Activated naive CD4-positive, alpha-beta T cell treated with anti-CD3 and anti-CD28 coated beads for 36 hours (primary cell): ENCODE measurements at regions of chr6 and their contacts with region 1.

Region 1: DNA sequence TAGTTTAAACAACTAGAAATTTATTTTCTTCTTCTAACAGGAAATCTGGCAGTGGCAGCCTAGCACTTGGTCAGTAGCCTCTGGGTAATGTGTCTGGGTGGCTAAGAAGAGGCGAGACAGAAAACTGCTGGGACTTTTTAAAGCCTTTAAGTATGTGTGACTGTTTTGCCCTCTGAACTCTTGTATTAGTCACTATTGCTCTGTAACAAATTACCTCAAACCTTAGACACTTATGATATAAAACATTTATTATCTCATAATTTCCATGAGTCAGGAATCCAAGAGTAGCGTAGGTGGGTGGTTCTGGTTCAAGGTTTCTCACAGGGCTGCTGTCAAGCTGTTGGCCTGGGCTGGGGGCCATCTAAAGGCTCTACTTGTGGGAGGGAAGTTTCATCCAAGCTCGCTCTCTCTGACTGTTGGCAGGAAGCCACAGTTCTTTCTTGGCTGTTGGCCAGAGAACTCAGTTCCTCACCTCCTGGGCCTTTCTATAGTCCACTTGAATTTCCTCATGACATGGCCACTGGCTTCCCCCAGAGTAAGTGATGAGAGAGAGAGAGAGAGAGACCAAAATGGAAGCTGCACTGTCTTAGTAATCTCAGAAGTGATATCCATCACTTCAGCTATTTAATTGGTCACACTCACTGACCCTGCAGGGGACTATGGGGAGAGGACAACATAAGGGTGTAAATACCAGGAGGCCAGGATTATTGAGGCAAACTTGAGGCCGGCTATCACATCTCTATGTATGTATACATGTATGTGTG is 17.4 kb upstream of the TBC1D22B start:
- DNase-seq: peak; percentile 93
- H3K4me3 Mint-ChIP-seq: no peak overlapping the region
- H3K27ac Mint-ChIP-seq: peak overlapping the region; percentile 83
- H3K4me1 Mint-ChIP-seq: peaks cover 39% of the 10 kb centered on the region
- H3K27me3 Mint-ChIP-seq: no peaks in the 10 kb centered on the region

Region 2: GRCh38 chr6:37155394-37156312 is 84.5 kb before region 1 on chr6:
- CTCF ChIA-PET with region 1: no interaction called
- intact Hi-C with region 1: no loop called
- DNase-seq: peak; percentile 87
- H3K4me3 Mint-ChIP-seq: peak overlapping the region; percentile 39
- H3K27ac Mint-ChIP-seq: peak overlapping the region; percentile 90
- H3K4me1 Mint-ChIP-seq: peaks cover 32% of the 10 kb centered on the region
- H3K27me3 Mint-ChIP-seq: no peaks in the 10 kb centered on the region

Region 3: GRCh38 chr6:37222125-37222967 is 17.8 kb before region 1 on chr6:
- CTCF ChIA-PET with region 1: interaction called, 4 read pairs
- intact Hi-C with region 1: loop called (anchors 1 kb)
- DNase-seq: peak; percentile 90
- H3K4me3 Mint-ChIP-seq: peak overlapping the region; percentile 56
- H3K27ac Mint-ChIP-seq: peak overlapping the region; percentile 26
- H3K4me1 Mint-ChIP-seq: peaks cover 24% of the 10 kb centered on the region
- H3K27me3 Mint-ChIP-seq: no peaks in the 10 kb centered on the region